HEK293T (cell line): ENCODE measurements at regions of chrX and their contacts with region 1.

Region 1: DNA sequence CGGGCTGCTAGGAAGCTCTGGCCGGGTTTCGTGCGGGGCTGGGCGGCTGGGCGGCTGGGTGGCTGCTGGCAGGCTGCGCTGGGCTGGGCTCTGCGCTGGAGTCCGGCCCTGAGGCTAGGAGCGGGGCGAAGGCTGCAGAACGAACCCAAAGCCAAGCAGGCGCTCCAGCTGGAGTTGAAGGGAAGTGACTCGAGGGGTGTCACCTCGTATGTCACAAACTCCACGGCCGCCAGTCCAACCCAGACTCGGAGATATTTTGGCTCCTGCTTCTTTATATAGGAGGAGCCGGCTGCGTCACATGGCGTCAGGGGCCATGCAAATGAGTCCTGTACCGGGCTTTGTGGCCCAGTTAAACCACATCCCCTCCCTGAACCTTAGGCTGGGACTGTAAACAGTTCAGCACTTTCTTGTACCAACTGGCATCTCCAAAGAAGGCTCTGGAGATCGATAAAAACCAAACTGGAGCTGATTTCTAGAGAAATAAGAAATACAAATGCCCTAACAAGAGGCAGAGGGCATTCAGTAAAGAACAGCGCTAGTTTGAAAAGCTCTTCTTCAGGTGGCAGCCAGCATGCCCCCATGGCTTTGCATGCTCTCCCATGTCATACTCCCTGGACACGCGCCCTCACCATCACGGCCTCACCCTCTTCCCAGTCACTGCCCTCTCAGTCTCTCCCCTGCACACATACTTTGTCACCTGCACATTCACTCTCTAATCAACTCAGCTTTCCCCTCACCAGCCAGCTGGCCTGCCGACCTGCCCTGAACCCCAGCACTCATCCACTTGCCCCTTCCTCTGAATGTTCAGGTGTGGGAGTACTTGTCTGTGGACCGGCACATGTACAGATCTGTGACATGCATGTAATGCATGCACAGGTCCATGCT is 58.5 kb downstream of the TSC22D3 start:
- DNase-seq: peak; percentile 67

Region 2: GRCh38 chrX:107272431-107272921 is 444.6 kb before region 1 on chrX:
- CTCF ChIA-PET with region 1: no interaction called
- POLR2A ChIA-PET with region 1: no interaction called
- DNase-seq: no peak

Region 3: DNA sequence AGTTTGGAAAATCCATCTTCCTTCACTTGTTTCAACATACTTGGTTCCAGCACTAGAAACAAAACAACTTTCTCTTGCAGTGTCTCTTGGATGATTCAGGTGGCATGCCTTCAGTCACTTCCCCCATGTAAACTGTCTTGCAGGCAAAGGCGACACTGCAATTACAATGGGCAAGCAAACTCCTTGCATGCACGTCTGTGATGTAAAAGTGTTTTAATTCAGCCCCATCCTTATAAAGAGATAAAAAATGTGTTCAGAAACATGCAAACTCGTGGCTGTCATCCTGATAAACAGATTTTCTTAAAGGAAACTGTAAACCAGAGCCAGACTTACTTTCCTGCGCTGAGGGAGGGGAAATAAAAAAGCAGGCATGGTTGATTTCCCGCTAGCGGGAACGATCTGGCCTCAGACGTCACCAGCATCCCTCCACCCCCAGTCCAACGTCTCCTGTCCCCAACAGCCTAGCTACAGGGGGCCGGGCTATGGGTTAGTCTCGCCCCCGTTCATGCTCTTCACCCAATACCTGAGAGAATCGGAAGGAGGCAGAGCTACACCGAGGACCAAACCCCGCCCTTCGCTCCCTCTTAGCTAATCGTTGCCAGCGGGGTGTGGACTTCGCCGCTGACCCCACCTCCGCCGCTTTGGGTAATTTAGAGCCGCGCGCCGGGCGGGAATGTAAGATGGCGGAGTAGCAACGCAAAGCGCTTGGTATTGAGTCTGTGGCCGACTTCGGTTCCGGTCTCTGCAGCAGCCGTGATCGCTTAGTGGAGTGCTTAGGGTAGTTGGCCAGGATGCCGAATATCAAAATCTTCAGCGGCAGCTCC is 89.0 kb before region 1 on chrX and contains the start of gene PRPS1:
- CTCF ChIA-PET with region 1: no interaction called
- POLR2A ChIA-PET with region 1: interaction called, 12 read pairs
- DNase-seq: peak; percentile 96

Region 4: GRCh38 chrX:107662145-107662544 is 54.9 kb before region 1 on chrX:
- CTCF ChIA-PET with region 1: interaction called, 6 read pairs
- POLR2A ChIA-PET with region 1: interaction called, 724 read pairs
- DNase-seq: no peak

Region 5: DNA sequence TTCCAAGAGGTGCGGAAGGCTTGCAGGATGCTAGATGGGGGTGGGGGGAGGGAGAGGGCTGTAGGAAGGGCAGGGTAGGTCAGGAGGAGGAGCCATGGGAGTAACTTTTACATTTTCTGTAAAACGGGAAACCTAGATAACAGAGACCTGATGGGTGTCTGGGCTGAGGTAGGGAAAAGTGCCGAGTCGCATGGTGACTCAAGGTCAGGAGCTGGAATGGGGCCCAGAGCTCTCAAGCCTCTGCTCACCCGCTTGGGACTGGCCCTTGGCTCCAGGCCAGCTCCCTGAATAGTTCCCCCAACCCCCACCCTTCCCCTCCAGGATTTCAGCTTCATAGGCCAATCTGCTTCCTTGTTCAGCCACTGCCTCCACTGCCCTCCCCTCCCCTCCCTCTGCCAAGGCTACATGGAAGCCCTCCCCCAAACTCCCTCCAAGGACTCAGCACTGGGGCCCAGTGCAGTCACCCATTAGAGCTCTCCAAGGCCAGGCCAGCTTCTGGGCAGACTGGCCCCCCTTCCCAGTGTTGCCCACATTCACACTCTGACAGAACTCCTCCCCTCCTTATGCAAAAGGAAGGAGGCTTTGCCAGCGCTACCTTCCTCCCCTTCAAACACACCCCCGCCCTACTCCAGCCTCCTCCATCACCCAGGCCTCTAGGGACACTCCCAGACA is 14.9 kb after region 1 on chrX:
- CTCF ChIA-PET with region 1: interaction called, 13 read pairs
- POLR2A ChIA-PET with region 1: interaction called, 536 read pairs
- DNase-seq: peak; percentile 61

Region 6: GRCh38 chrX:107753187-107753586 is 36.1 kb after region 1 on chrX:
- CTCF ChIA-PET with region 1: interaction called, 3 read pairs
- POLR2A ChIA-PET with region 1: interaction called, 22 read pairs
- DNase-seq: no peak

Region 7: DNA sequence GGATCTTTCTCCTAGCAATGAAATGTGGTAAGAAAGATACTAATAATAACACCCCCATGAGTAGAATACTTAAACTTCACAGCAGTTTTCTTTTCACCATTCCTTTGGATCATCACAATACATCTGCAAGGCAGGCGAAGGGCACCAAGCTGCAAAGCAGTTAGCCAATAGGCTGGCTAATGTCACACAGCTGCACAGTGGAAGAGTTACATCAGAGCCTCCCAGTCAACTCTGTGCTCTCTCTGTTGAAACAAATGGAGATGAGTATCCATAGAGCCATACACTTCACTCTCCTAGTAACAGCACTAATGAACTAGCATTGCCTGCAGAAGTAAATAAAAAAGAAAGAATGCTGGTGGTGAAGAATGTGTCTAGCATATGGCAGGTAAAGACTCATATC is 513.5 kb after region 1 on chrX:
- CTCF ChIA-PET with region 1: no interaction called
- POLR2A ChIA-PET with region 1: no interaction called
- DNase-seq: no peak